Endothelial cell of umbilical vein (primary cell): ENCODE measurements at regions of chr4 and their contacts with region 1.

Region 1: GRCh38 chr4:75289914-75290582 is 224.2 kb downstream of the RCHY1 start:
- DNase-seq: no peak
- H3K4me3 ChIP-seq: no peak overlapping the region
- H3K27ac ChIP-seq: no peak overlapping the region
- H3K4me1 ChIP-seq: no peaks in the 10 kb centered on the region
- H3K27me3 ChIP-seq: no peaks in the 10 kb centered on the region
- CTCF ChIP-seq: peak; percentile 30 to 32
- POLR2A ChIP-seq: no peak

Region 2: GRCh38 chr4:74897386-74897785 is 392.7 kb before region 1 on chr4:
- CTCF ChIA-PET with region 1: no interaction called
- POLR2A ChIA-PET with region 1: no interaction called
- dilution Hi-C with region 1: no loop called
- intact Hi-C with region 1: no loop called
- DNase-seq: no peak
- H3K4me3 ChIP-seq: no peak overlapping the region
- H3K27ac ChIP-seq: no peak overlapping the region
- H3K4me1 ChIP-seq: no peaks in the 10 kb centered on the region
- H3K27me3 ChIP-seq: no peaks in the 10 kb centered on the region
- CTCF ChIP-seq: no peak
- POLR2A ChIP-seq: no peak

Region 3: GRCh38 chr4:74932816-74933561 is 357.1 kb before region 1 on chr4 and contains the start of gene PARM1:
- CTCF ChIA-PET with region 1: interaction called, 16 read pairs
- POLR2A ChIA-PET with region 1: no interaction called
- dilution Hi-C with region 1: no loop called
- intact Hi-C with region 1: loop called (anchors 1 kb)
- DNase-seq: peak; percentile 79
- H3K4me3 ChIP-seq: peak within 1 kb of the TSS; percentile 15 to 38 (median 33)
- H3K27ac ChIP-seq: no peak within 1 kb of the TSS
- H3K4me1 ChIP-seq: peaks cover 17% of the 10 kb centered on the region
- H3K27me3 ChIP-seq: peaks cover 35 to 44% of the 10 kb centered on the region in 2 experiments
- CTCF ChIP-seq: peak; percentile 59 to 81
- POLR2A ChIP-seq: no peak
- total RNA-seq, gene PARM1: not detected in 2 replicates

Region 4: DNA sequence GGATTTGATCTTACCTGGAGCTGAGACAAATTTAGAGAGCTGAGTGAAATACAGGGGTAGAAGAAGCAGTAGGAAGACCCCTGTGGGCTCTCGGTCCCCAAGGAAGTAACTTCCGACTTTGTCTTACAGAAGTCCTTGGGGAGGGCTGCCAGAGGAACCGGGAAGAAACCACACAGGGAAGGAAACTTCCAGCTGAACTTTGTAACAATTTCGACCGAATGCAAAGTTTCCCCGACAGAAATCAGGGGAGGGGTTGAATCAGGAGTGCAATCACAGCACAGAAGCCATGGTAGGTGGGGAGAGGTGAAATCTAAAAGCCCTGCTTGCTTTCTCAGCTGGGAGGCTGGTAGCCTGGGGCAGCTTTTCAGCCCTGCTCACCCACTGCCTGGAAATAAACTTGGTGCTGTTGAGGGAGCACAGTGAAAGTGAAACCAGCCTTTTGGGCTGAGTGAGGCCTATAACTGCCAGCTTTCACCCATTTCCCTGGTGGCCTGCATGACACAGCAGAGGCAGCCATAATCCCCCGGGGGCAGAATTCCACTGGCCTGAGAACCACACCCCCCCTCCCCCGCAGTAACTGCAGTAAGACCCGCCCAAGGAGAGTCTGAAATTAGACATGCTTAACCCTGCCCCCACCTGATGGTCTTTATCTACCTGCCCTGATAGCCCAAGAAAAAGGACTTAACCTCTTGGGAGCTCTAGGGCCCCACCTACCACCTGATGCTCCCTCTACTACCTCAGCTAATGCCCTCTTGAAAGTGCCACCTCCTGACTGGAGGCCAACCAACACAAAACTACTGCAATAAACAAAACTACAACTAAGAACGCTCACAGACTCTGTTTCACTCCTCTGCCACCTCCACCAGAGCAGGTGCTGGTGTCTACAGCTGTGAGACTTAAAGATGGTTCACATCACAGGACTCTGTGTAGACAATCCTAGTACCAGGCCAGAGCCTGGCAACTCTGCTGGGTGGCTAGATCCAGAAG is 109.0 kb before region 1 on chr4:
- CTCF ChIA-PET with region 1: no interaction called
- POLR2A ChIA-PET with region 1: no interaction called
- dilution Hi-C with region 1: no loop called
- intact Hi-C with region 1: no loop called
- DNase-seq: no peak
- H3K4me3 ChIP-seq: no peak overlapping the region
- H3K27ac ChIP-seq: no peak overlapping the region
- H3K4me1 ChIP-seq: no peaks in the 10 kb centered on the region
- H3K27me3 ChIP-seq: no peaks in the 10 kb centered on the region
- CTCF ChIP-seq: no peak
- POLR2A ChIP-seq: no peak